ENCODE measurements at regions of chr15 and their contacts with region 1.

Region 1: GRCh38 chr15:56040081-56041035 is 46.9 kb upstream of the NEDD4 start:
- DNase-seq: peak; percentile 37 to 89
- H3K4me3 ChIP-seq: no peak overlapping the region
- H3K27ac ChIP-seq: peak overlapping the region; percentile 68 to 74
- H3K4me1 ChIP-seq: peaks cover 5% of the 10 kb centered on the region in 2 donors
- H3K27me3 ChIP-seq: no peaks in the 10 kb centered on the region
- CTCF ChIP-seq: no peak

Region 2: DNA sequence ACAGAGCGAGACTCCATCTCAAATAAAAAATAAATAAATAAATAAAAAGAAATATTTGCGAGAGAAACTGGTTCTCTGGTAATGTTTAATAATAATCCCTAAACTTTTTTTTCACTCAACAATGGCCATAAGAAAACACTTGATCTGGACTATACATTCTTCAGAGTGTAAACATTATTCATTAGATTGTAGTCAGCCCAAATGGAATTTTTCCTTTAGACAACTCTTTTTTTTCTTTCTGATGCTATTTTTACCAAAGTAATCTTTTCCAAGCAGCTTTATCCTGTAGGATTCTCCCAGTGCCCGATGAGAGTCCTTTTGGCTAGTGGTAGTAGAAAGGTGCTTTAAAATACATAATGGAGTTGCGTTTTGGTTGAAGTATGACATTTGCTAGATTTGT is 137.4 kb before region 1 on chr15:
- intact Hi-C with region 1: loop called (anchors 5 kb)
- DNase-seq: no peak
- H3K4me3 ChIP-seq: no peak overlapping the region
- H3K27ac ChIP-seq: no peak overlapping the region
- H3K4me1 ChIP-seq: no peaks in the 10 kb centered on the region
- H3K27me3 ChIP-seq: no peaks in the 10 kb centered on the region
- CTCF ChIP-seq: no peak

Region 3: DNA sequence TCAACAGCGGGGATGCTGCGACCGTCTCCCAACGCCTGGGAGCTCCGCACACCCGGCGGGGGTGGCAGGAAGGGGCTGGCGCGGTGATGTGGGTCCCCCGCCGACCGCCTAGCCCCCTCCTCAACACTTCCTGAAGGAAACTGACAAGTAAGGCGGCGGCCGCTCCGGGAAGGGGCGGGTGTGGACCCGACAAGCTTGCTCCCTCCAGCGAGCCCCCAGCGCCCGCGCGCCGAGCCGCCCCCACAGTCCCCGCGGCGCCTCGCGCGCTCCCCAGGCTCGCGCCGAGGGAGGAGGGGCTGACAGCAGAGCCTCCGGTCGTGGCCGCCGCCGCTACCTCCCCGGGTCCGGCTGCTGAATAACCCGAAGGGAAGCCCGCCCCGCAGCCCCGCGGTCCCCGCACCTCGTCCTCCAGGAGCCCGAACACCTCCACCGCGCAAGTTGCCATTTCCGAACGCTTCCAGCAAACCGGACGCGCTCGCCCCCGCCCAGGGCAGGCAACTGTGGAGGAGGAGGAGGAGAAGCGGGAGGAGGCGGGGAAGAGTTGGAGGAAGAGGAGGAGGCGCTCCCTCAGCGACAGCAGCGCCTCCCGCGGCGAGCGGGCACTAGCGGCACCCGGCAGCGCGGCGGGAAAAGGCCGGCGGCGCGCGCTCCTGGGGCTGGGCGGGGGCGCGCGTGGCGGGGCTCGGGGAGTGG is 47.1 kb before region 1 on chr15 and contains the start of gene NEDD4:
- intact Hi-C with region 1: loop called (anchors 2 kb)
- DNase-seq: peak; percentile 33 to 93
- H3K4me3 ChIP-seq: peak within 1 kb of the TSS; percentile 88 to 89
- H3K27ac ChIP-seq: peak within 1 kb of the TSS; percentile 88 to 95
- H3K4me1 ChIP-seq: peaks cover 0 to 8% of the 10 kb centered on the region in 2 donors
- H3K27me3 ChIP-seq: no peaks in the 10 kb centered on the region
- CTCF ChIP-seq: peak; percentile 21 to 57 (median 38)
- total RNA-seq, gene NEDD4: 6.1 TPM

Region 4: DNA sequence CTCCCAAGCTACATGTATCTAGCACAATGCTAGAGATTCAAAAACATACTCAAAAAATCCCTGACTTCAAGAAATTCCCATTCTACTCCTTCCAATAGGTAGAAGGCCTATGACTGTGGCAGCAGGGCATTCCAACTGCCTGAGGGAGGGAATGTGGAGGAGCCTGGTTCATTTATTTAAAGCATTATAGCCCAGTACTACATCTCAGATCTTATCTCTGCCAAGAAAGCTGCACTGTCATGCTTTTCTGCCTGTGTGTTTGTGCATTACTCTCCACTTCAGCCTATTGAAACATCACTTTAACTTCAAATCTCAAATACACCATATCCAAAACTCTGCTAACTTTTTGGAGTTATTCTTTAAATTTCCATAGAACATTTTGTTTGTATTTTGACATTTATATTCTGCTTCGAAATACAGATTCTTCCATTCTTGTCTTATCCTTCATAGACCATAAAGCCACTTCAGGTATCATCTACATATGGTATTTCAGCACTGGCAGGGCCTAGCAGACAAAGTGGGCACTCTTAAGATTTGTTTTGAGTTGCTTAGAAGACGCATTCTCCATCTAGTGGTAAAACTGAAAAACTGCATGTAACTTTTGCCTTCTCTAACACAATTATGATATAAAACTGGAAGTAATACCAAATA is 12.2 kb after region 1 on chr15:
- intact Hi-C with region 1: loop called (anchors 1 kb)
- DNase-seq: no peak
- H3K4me3 ChIP-seq: no peak overlapping the region
- H3K27ac ChIP-seq: no peak overlapping the region
- H3K4me1 ChIP-seq: no peaks in the 10 kb centered on the region
- H3K27me3 ChIP-seq: no peaks in the 10 kb centered on the region
- CTCF ChIP-seq: peak; percentile 59 to 78 (median 78)

Region 5: GRCh38 chr15:56232058-56232457 is 191.7 kb after region 1 on chr15:
- intact Hi-C with region 1: no loop called
- DNase-seq: no peak
- H3K4me3 ChIP-seq: no peak overlapping the region
- H3K27ac ChIP-seq: no peak overlapping the region
- H3K4me1 ChIP-seq: peaks cover 0 to 3% of the 10 kb centered on the region in 2 donors
- H3K27me3 ChIP-seq: no peaks in the 10 kb centered on the region
- CTCF ChIP-seq: no peak